ENCODE measurements at regions of chr1 and their contacts with region 1.

Region 1: GRCh38 chr1:68103884-68104554 is 53.6 kb upstream of the DIRAS3 start:
- DNase-seq: no peak
- H3K4me3 ChIP-seq: no peak overlapping the region
- CTCF ChIP-seq: no peak
- POLR2A ChIP-seq: no peak

Region 2: DNA sequence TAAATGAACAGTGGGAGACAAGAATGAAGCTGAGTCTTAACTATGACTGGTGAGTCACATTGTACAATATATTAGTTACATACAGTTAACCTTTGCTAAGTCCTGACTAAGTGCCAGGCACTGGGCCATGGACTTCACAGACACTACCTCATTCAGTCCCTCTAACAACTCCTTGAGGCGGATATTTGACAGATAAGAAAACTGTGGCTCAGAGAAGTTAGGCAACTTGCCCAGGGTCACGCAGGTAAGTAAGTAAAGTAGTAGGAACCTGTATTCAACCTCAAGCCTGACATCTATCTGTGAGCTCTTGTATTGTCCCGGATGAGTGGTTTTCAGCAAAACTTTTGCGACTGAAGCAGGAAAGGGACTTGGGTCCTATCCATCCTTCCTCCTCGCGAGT is 332.9 kb before region 1 on chr1:
- intact Hi-C with region 1: loop called (anchors 5 kb)
- DNase-seq: no peak
- H3K4me3 ChIP-seq: no peak overlapping the region
- CTCF ChIP-seq: no peak
- POLR2A ChIP-seq: no peak

Region 3: DNA sequence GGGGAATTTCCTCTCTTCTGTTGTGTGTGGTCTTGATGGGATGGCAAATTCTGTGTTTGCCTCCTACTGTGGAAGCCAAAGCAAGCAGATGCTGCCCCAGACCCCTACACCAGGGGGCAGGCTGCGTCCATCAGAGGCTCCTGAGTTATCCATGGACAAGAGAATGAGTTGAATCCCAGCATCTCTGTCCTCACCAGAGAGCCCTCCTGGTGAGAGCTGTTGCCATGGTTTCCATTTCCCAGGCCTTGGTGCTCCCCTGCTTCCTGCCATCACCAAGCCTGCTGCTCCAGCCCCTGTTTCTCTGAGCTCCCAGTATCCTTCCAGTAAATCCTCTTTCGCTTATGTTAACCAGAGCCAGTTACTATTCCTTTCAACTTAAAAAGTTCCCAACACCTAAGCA is 250.3 kb before region 1 on chr1:
- intact Hi-C with region 1: loop called (anchors 10 kb)
- DNase-seq: no peak
- H3K4me3 ChIP-seq: no peak overlapping the region
- CTCF ChIP-seq: no peak
- POLR2A ChIP-seq: no peak

Region 4: DNA sequence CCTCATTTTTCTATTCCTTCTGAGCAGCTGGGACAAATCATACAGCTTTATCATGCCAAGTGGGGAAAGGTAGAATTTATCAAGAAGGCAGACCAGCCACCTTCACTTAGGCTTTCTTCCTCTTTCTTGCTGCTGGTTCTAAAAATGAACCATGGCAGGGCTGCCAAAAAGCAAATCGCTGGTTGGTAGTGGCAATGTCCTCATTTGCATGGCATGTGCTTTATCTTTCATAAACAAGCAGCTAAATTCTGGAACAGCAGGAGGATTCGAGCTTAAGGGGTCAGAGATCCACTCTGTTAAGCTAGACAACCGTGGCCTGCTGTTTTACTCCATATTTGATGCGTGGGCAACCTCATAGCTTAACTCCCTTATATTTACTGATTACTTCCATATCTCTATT is 254.4 kb after region 1 on chr1:
- intact Hi-C with region 1: no loop called
- DNase-seq: no peak
- H3K4me3 ChIP-seq: no peak overlapping the region
- CTCF ChIP-seq: no peak
- POLR2A ChIP-seq: no peak